GM12878 (cell line): ENCODE measurements at regions of chr7 and their contacts with region 1.

Region 1: GRCh38 chr7:74173866-74174605 is at the start of gene EIF4H:
- DNase-seq: peak; percentile 58
- ATAC-seq: peak; percentile 90
- H3K4me3 ChIP-seq: peak within 1 kb of the TSS; percentile 98
- H3K27ac ChIP-seq: peak within 1 kb of the TSS; percentile 80
- H3K4me1 ChIP-seq: peaks cover 6% of the 10 kb centered on the region
- H3K27me3 ChIP-seq: no peaks in the 10 kb centered on the region
- CTCF ChIP-seq: no peak
- EP300 ChIP-seq: 0 out of 4 replicates have a peak, but pooled peaks of 1 of the 2 experiments have one; percentile 14
- POLR2A ChIP-seq: peak; percentile 95
- RAD21 ChIP-seq: no peak
- polyA plus RNA-seq, gene EIF4H: 9.9 to 23.8 TPM

Region 2: DNA sequence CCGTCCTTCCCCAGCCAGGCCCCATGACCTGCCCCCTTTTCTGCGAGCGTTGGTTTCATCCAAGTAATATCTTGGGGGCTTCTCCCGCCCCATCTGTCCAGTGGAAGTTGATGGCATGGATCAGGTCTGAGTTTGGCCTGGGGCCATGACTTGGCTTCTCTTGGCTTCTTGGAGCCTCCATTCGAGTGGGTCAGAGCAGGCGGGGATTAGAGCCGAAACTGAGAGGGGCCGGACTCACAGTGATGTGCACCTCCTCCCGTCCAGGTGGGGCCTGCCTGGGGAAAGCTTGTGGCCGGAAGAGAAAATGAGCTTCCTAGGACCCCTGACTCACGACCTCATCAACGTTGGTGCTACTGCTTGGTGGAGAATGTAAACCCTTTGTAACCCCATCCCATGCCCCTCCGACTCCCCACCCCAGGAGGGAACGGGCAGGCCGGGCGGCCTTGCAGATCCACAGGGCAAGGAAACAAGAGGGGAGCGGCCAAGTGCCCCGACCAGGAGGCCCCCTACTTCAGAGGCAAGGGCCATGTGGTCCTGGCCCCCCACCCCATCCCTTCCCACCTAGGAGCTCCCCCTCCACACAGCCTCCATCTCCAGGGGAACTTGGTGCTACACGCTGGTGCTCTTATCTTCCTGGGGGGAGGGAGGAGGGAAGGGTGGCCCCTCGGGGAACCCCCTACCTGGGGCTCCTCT is 105.5 kb before region 1 on chr7:
- CTCF ChIA-PET with region 1: interaction called, 21 read pairs
- POLR2A ChIA-PET with region 1: interaction called, 7 read pairs
- RAD21 ChIA-PET with region 1: interaction called, 9 read pairs
- SMC1A ChIA-PET with region 1: interaction called, 8 read pairs
- in situ Hi-C with region 1: no loop called
- intact Hi-C with region 1: no loop called
- DNase-seq: no peak
- ATAC-seq: no peak
- H3K4me3 ChIP-seq: no peak overlapping the region
- H3K27ac ChIP-seq: no peak overlapping the region
- H3K4me1 ChIP-seq: no peaks in the 10 kb centered on the region
- H3K27me3 ChIP-seq: no peaks in the 10 kb centered on the region
- CTCF ChIP-seq: no peak
- EP300 ChIP-seq: no peak
- POLR2A ChIP-seq: no peak
- RAD21 ChIP-seq: no peak

Region 3: GRCh38 chr7:74083117-74083876 is 90.7 kb before region 1 on chr7 and contains the start of gene LIMK1:
- CTCF ChIA-PET with region 1: no interaction called
- POLR2A ChIA-PET with region 1: interaction called, 7 read pairs
- RAD21 ChIA-PET with region 1: interaction called, 3 read pairs
- SMC1A ChIA-PET with region 1: interaction called, 4 read pairs
- in situ Hi-C with region 1: loop called (anchors 10 kb)
- intact Hi-C with region 1: loop called (anchors 1 kb)
- DNase-seq: no peak
- ATAC-seq: peak; percentile 81
- H3K4me3 ChIP-seq: peak within 1 kb of the TSS; percentile 94
- H3K27ac ChIP-seq: peak within 1 kb of the TSS; percentile 63
- H3K4me1 ChIP-seq: peaks cover 13% of the 10 kb centered on the region
- H3K27me3 ChIP-seq: no peaks in the 10 kb centered on the region
- CTCF ChIP-seq: no peak
- EP300 ChIP-seq: no peak
- POLR2A ChIP-seq: peak; percentile 65
- RAD21 ChIP-seq: no peak
- polyA plus RNA-seq, gene LIMK1: 0.71 to 0.77 TPM

Region 4: DNA sequence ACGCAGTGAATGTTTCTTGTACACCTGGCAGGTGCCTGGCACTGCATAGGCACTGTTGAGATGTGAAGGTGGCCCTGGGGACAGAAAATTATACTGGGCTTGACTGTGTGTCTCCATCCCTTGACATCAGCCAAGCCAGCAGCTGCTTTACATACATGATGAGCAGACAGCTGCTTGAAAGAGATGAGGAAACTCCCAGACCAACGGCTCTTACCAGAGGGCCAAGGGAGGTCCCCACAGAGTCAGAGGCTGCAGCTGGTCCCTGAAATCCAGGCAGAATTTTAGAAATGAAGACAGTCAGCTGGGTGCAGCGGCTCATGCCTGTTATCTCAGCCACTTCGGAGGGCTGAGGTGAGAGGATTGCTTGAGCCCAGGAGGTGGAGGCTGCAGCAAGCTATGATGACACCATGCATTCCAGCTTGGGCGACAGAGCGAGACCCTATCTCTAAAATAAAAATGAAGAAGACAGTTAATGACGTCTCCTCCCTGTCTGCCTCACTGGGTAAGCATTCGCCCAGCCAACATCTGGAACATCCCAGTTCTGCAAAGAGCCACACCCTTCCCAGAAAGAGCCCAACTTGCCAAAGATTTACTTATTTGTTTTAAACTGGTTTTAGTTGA is 72.9 kb before region 1 on chr7:
- CTCF ChIA-PET with region 1: interaction called, 12 read pairs
- POLR2A ChIA-PET with region 1: interaction called, 8 read pairs
- RAD21 ChIA-PET with region 1: interaction called, 12 read pairs
- SMC1A ChIA-PET with region 1: interaction called, 4 read pairs
- in situ Hi-C with region 1: no loop called
- intact Hi-C with region 1: no loop called
- DNase-seq: peak; percentile 60
- ATAC-seq: peak; percentile 93
- H3K4me3 ChIP-seq: peak overlapping the region; percentile 33; the same call in 1 of the 2 replicates
- H3K27ac ChIP-seq: peak overlapping the region; percentile 79
- H3K4me1 ChIP-seq: peaks cover 22% of the 10 kb centered on the region
- H3K27me3 ChIP-seq: no peaks in the 10 kb centered on the region
- CTCF ChIP-seq: no peak
- EP300 ChIP-seq: peak in 1 of 2 experiments; percentile 53; a peak in 1 of 4 replicates
- POLR2A ChIP-seq: no peak
- RAD21 ChIP-seq: no peak